Body of pancreas (tissue), 4 donors: ENCODE measurements at regions of chr17 and their contacts with region 1.

Region 1: DNA sequence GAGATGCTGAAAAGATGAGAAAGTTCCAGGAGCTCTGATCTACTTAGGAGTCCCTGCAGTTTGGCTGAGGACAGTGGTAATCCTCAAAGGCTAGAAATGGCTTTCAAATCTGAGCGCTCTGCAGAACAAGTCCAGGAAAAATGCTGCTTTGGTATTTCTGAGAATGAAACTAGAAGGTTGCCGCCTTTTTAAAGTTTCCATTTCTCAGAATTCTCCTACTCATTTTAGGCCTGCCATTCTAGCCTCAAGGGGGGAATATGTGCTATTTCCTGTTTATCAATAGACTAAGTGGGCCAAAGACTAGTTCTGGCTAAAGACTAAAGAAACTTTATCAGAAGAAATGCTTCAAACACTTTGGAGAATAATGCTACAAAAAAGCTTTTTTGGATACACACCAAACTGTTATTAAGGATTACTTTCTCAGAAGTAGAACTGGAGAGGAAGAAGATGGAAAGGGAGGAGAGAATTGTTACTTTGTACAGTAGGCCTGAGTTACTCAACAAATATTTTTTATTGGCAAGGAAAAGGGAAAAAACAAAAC is at the start of gene SLFN12L:
- DNase-seq: no peak
- ATAC-seq: no peak
- H3K4me3 ChIP-seq: no peak within 1 kb of the TSS
- H3K27ac ChIP-seq: no peak within 1 kb of the TSS
- H3K4me1 ChIP-seq: peaks cover 4% of the 10 kb centered on the region
- H3K27me3 ChIP-seq: no peaks in the 10 kb centered on the region
- CTCF ChIP-seq: no peak
- POLR2A ChIP-seq: no peak
- total RNA-seq, gene SLFN12L: 0.78 to 1.6 TPM

Region 2: DNA sequence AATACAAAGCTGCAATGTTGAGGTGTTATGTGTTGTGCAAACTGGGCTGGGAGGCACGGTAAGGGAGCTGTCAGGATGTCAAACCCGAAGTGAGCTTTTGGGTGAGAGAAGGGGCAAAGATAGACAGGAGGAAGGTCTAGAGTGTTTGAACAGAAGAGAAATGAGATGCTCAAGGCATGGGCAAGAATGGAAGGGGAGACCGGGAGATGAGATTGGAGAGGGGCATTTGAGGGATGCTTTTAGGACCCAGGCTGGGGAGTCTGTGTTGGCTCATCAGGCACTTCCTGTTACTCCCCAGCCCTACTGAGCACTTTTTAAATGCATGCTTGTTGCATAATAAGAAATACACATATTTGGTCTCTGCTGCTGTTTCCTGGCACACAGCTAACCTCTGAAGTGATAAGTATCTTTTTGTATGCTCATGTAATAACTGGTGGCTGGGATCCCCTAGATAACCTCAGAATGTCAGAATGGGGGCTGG is 376.4 kb before region 1 on chr17:
- intact Hi-C with region 1: loop called (anchors 10 kb)
- DNase-seq: no peak
- ATAC-seq: no peak
- H3K4me3 ChIP-seq: no peak overlapping the region
- H3K27ac ChIP-seq: no peak overlapping the region
- H3K4me1 ChIP-seq: no peaks in the 10 kb centered on the region
- H3K27me3 ChIP-seq: no peaks in the 10 kb centered on the region
- CTCF ChIP-seq: no peak
- POLR2A ChIP-seq: no peak